Endothelial cell of umbilical vein (primary cell): ENCODE measurements at regions of chr6 and their contacts with region 1.

Region 1: GRCh38 chr6:41318654-41319565 is 16.5 kb upstream of the NCR2 start:
- DNase-seq: peak; percentile 74
- H3K4me3 ChIP-seq: peak overlapping the region in 1 of 3 experiments; percentile 4
- H3K27ac ChIP-seq: peak overlapping the region; percentile 60
- H3K4me1 ChIP-seq: peaks cover 22% of the 10 kb centered on the region
- H3K27me3 ChIP-seq: peaks cover 14 to 51% of the 10 kb centered on the region in 2 experiments
- CTCF ChIP-seq: peak; percentile 99 to 100
- POLR2A ChIP-seq: no peak

Region 2: GRCh38 chr6:41072676-41073623 is 246.0 kb before region 1 on chr6 and contains the start of gene NFYA:
- CTCF ChIA-PET with region 1: no interaction called
- POLR2A ChIA-PET with region 1: no interaction called
- dilution Hi-C with region 1: no loop called
- intact Hi-C with region 1: loop called (anchors 5 kb)
- DNase-seq: peak; percentile 100
- H3K4me3 ChIP-seq: peak within 1 kb of the TSS; percentile 84 to 97 (median 90)
- H3K27ac ChIP-seq: peak within 1 kb of the TSS; percentile 98
- H3K4me1 ChIP-seq: peaks cover 21% of the 10 kb centered on the region
- H3K27me3 ChIP-seq: no peaks in the 10 kb centered on the region
- CTCF ChIP-seq: peak; percentile 11 to 29
- POLR2A ChIP-seq: peak; percentile 72
- total RNA-seq, gene NFYA: 29.0 and 30.9 TPM in 2 replicates

Region 3: DNA sequence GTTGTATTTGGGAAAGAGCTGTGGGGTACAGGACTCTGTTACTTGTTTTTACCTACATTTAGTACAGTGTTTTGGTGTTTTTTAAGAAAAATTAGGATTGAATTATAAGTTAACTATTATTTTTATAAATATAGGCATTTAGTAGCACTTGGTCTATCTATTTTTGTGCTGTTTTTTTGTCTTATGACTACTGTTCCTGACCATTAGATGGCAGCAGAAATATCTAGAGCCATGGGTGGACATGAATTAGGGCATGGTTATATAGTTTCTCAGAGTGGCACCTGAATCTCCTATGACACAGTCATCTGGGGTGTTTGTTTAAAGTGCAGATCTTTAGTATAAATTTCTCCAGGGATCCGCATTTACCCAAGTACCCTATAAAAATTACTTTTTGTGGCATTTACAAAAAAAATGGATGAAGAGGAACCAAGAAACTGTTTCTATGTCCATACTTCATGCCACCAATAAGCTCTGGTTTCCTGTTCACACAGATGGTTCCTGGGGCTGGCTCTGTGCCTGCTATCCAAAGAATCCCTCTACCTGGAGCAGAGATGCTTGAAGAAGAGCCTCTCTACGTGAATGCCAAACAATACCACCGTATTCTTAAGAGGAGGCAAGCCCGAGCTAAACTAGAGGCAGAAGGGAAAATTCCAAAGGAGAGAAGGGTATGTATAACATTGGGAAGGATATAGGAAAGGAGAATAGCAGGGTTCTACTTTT is 226.3 kb before region 1 on chr6:
- CTCF ChIA-PET with region 1: interaction called, 3 read pairs
- POLR2A ChIA-PET with region 1: no interaction called
- dilution Hi-C with region 1: no loop called
- intact Hi-C with region 1: loop called (anchors 2 kb)
- DNase-seq: peak; percentile 36
- H3K4me3 ChIP-seq: no peak overlapping the region
- H3K27ac ChIP-seq: no peak overlapping the region
- H3K4me1 ChIP-seq: peaks cover 16% of the 10 kb centered on the region
- H3K27me3 ChIP-seq: no peaks in the 10 kb centered on the region
- CTCF ChIP-seq: peak; percentile 9 to 39
- POLR2A ChIP-seq: no peak

Region 4: GRCh38 chr6:41191569-41191968 is 127.3 kb before region 1 on chr6:
- CTCF ChIA-PET with region 1: interaction called, 18 read pairs
- POLR2A ChIA-PET with region 1: no interaction called
- dilution Hi-C with region 1: no loop called
- intact Hi-C with region 1: loop called (anchors 2 kb)
- DNase-seq: peak; percentile 17
- H3K4me3 ChIP-seq: no peak overlapping the region
- H3K27ac ChIP-seq: no peak overlapping the region
- H3K4me1 ChIP-seq: no peaks in the 10 kb centered on the region
- H3K27me3 ChIP-seq: peaks cover 0 to 3% of the 10 kb centered on the region in 2 experiments
- CTCF ChIP-seq: peak; percentile 42 to 78
- POLR2A ChIP-seq: no peak

Region 5: DNA sequence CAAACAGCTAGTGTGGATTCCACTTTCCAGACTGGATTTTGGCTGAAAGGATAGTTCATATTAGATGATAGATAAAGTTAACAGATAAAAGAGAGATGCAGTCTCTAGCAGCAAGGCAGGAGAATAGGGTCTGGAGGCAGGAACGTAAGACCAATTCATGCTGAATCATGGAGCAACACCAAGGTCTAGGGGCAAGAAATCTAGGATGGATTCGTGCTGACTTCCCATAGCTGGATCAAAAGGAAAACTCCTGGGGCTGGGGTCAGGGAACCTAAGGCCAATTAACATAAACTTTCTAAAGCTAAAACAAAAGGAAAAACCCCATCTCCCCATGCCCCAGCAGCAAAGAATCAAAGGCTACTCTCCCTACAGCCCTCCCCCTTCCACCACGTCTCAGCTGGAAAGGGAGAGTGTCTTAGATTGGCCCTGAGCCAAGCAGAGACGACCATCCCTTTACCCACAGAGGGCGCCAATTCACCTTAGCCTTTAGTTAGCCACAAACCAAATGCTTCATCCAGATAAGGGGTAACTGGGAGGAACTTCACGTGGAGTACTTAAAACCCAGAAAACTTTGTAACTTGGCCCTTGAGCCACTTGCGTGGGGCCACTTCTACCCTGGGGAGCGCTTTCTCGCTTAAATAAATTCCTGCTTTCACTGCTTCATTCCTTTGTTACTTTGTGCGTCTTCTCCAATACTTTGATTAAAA is 40.1 kb before region 1 on chr6:
- CTCF ChIA-PET with region 1: no interaction called
- POLR2A ChIA-PET with region 1: no interaction called
- dilution Hi-C with region 1: no loop called
- intact Hi-C with region 1: loop called (anchors 1 kb)
- DNase-seq: peak; percentile 69
- H3K4me3 ChIP-seq: no peak overlapping the region
- H3K27ac ChIP-seq: no peak overlapping the region
- H3K4me1 ChIP-seq: no peaks in the 10 kb centered on the region
- H3K27me3 ChIP-seq: peaks cover 0 to 2% of the 10 kb centered on the region in 2 experiments
- CTCF ChIP-seq: peak; percentile 38 to 76
- POLR2A ChIP-seq: no peak

Region 6: GRCh38 chr6:41306187-41306854 is 12.6 kb before region 1 on chr6:
- CTCF ChIA-PET with region 1: interaction called, 122 read pairs
- POLR2A ChIA-PET with region 1: no interaction called
- dilution Hi-C with region 1: no loop called
- intact Hi-C with region 1: loop called (anchors 1 kb)
- DNase-seq: peak; percentile 49
- H3K4me3 ChIP-seq: no peak overlapping the region
- H3K27ac ChIP-seq: no peak overlapping the region
- H3K4me1 ChIP-seq: no peaks in the 10 kb centered on the region
- H3K27me3 ChIP-seq: peaks cover 25 to 33% of the 10 kb centered on the region in 2 experiments
- CTCF ChIP-seq: peak; percentile 45 to 47
- POLR2A ChIP-seq: no peak